B cell (primary cell): ENCODE measurements at regions of chr7 and their contacts with region 1.

Region 1: GRCh38 chr7:5083311-5083711 is 37.7 kb downstream of the RBAK start:
- DNase-seq: no peak
- ATAC-seq: no peak
- H3K4me3 ChIP-seq: no peak overlapping the region
- H3K4me3 Mint-ChIP-seq: no peak overlapping the region
- H3K27ac ChIP-seq: no peak overlapping the region
- H3K27ac Mint-ChIP-seq: no peak overlapping the region
- H3K4me1 ChIP-seq: peaks cover 0 to 5% of the 10 kb centered on the region in 2 donors
- H3K4me1 Mint-ChIP-seq: no peaks in the 10 kb centered on the region
- H3K27me3 ChIP-seq: peaks cover 0 to 20% (median 1%) of the 10 kb centered on the region in 4 experiments
- H3K27me3 Mint-ChIP-seq: peaks cover 19% of the 10 kb centered on the region
- CTCF ChIP-seq: no peak

Region 2: DNA sequence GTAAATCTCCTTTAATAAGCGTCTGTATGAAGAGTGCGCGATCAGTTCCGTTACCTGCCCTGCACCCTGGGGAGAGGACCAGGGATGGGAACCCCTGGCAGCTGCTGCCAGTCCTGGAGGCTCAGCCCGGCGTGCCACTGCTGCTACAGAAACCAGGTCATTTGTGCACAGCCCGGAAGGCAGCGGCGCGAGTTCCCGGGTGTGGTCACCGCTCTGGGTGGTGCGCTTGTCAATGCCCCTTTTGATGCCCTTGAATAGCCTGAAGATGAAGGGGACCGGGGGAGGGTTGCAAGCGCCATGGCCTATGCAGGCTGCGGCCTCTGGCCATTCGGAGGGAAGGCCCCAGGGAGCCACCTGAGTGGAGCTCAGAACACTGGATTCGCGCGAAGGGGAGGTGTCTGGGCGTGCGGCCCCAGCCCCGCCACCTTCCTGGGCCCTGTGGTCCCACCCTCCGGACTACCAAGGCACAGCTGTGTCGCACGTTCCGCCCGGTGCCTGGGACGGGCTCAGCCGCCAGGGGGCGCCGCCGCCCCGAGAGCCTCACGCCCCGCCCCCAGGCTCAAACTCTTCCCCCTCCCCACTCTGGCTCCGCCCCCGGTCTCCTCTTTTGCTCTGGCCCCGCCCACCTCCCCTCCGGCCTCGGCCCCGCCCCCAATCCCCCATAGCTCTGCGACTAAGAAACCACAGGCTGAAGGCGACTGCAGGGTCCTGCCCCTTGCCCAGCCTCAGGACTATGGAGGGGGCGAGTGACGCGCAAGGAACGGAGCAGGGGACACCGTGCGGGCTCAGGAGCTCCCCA is 291.4 kb before region 1 on chr7:
- CTCF ChIA-PET with region 1: interaction called, 54 read pairs
- POLR2A ChIA-PET with region 1: no interaction called
- intact Hi-C with region 1: loop called (anchors 1 kb)
- DNase-seq: peak; percentile 87
- ATAC-seq: peak; percentile 94
- H3K4me3 ChIP-seq: peak overlapping the region in 4 of 5 experiments; percentile 47 to 63 (median 61)
- H3K4me3 Mint-ChIP-seq: peak overlapping the region; percentile 61
- H3K27ac ChIP-seq: no peak overlapping the region
- H3K27ac Mint-ChIP-seq: no peak overlapping the region
- H3K4me1 ChIP-seq: peaks cover 0 to 9% of the 10 kb centered on the region in 2 donors
- H3K4me1 Mint-ChIP-seq: peaks cover 2% of the 10 kb centered on the region
- H3K27me3 ChIP-seq: no peaks in the 10 kb centered on the region
- H3K27me3 Mint-ChIP-seq: no peaks in the 10 kb centered on the region
- CTCF ChIP-seq: peak; percentile 79

Region 3: DNA sequence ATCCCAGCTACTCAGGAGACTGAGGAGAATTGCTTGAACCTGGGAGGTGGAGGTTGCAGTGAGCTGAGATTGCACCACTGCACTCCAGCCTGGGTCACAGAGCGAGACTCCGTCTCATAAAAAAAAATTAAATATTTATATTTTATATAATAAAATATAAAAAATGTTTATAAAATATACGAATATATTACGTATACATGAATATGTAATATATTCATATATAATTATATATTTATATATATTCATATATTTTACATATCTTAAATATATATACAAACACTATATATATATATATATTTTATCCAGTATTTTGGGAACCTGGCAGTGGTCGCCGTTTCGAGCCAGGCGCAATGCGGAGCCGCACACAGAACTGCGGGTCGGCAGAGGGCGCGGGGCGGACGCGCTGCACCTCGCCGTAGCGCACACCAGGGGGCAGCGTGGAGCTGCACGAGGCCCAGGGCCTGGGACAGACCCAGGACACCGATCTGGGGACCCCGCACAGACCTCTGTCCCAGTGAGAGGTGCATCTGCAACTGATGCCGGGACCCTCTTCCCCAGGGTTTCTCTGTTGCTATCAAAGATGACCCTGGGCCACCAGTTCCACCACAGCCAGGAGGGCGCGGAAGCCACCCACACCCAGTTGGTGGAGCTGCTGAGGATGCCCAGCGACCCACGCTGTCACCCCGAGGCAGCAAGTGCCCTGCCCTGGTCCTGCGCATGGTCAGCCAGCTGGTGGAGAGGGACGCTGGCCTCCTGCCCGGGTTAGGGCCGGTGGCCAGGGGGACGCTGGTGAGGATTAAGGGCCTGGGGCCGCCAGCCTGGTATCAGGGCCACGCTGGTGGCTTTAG is 285.2 kb before region 1 on chr7:
- CTCF ChIA-PET with region 1: interaction called, 54 read pairs
- POLR2A ChIA-PET with region 1: no interaction called
- intact Hi-C with region 1: no loop called
- DNase-seq: peak; percentile 73
- ATAC-seq: peak; percentile 91
- H3K4me3 ChIP-seq: no peak overlapping the region
- H3K4me3 Mint-ChIP-seq: no peak overlapping the region
- H3K27ac ChIP-seq: no peak overlapping the region
- H3K27ac Mint-ChIP-seq: no peak overlapping the region
- H3K4me1 ChIP-seq: peaks cover 0 to under 1% of the 10 kb centered on the region in 2 donors
- H3K4me1 Mint-ChIP-seq: no peaks in the 10 kb centered on the region
- H3K27me3 ChIP-seq: no peaks in the 10 kb centered on the region
- H3K27me3 Mint-ChIP-seq: no peaks in the 10 kb centered on the region
- CTCF ChIP-seq: peak; percentile 97

Region 4: GRCh38 chr7:4830176-4830575 is 253.1 kb before region 1 on chr7:
- CTCF ChIA-PET with region 1: interaction called, 24 read pairs
- POLR2A ChIA-PET with region 1: no interaction called
- intact Hi-C with region 1: no loop called
- DNase-seq: peak; percentile 63
- ATAC-seq: peak; percentile 72
- H3K4me3 ChIP-seq: no peak overlapping the region
- H3K4me3 Mint-ChIP-seq: no peak overlapping the region
- H3K27ac ChIP-seq: no peak overlapping the region
- H3K27ac Mint-ChIP-seq: no peak overlapping the region
- H3K4me1 ChIP-seq: no peaks in the 10 kb centered on the region
- H3K4me1 Mint-ChIP-seq: no peaks in the 10 kb centered on the region
- H3K27me3 ChIP-seq: no peaks in the 10 kb centered on the region
- H3K27me3 Mint-ChIP-seq: no peaks in the 10 kb centered on the region
- CTCF ChIP-seq: peak; percentile 64

Region 5: DNA sequence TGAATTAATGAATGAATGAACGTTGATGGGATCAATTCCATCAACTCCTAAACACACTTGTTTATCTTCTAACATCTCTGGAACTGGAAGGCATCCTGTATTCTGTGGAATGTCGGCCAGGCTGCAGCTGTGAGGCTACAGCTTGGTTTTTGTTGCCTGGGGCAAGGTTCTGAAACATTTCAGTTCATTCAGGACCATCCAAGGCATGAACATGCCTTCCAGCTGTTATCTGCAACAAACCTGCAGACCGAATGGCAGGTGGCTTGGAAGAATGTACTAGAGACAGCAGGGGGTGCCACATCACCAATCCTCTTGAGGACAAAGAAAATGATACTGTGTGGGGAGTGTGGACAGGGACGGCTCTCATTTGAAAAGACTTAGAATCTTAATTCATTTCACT is 233.9 kb before region 1 on chr7:
- CTCF ChIA-PET with region 1: interaction called, 12 read pairs
- POLR2A ChIA-PET with region 1: no interaction called
- intact Hi-C with region 1: loop called (anchors 1 kb)
- DNase-seq: peak; percentile 23
- ATAC-seq: no peak
- H3K4me3 ChIP-seq: no peak overlapping the region
- H3K4me3 Mint-ChIP-seq: no peak overlapping the region
- H3K27ac ChIP-seq: no peak overlapping the region
- H3K27ac Mint-ChIP-seq: no peak overlapping the region
- H3K4me1 ChIP-seq: no peaks in the 10 kb centered on the region
- H3K4me1 Mint-ChIP-seq: peaks cover 4% of the 10 kb centered on the region
- H3K27me3 ChIP-seq: peaks cover 0 to 4% (median 0%) of the 10 kb centered on the region in 4 experiments
- H3K27me3 Mint-ChIP-seq: peaks cover 21% of the 10 kb centered on the region
- CTCF ChIP-seq: no peak

Region 6: DNA sequence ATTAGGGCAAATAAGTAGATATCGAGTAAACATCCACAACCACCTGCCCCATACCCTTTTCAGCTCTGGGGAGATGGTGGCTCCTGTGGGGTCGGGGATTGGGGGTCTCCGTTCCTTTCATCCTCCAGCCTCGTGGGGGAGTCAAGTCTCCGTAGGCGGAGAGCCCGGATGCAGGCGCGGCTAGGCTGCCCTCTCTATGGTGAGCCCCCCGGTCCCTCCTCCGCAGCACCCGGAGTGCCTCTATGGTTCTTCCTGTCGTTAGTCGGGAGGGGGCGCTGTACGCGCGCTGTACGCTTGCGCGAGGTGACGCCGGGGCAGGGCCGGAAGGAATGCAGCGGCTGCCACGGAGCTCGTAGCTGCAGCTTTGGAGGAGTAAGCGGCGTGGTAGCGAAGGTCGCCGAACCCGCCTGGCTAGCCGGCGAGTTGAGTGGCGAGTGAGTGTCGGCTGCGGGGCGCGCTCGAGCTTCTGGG is 109.5 kb before region 1 on chr7:
- CTCF ChIA-PET with region 1: interaction called, 41 read pairs
- POLR2A ChIA-PET with region 1: interaction called, 9 read pairs
- intact Hi-C with region 1: loop called (anchors 1 kb)
- DNase-seq: peak; percentile 96
- ATAC-seq: peak; percentile 94
- H3K4me3 ChIP-seq: peak overlapping the region in 4 of 5 experiments; percentile 44 to 84 (median 67)
- H3K4me3 Mint-ChIP-seq: peak overlapping the region; percentile 100
- H3K27ac ChIP-seq: peak overlapping the region; percentile 14 to 72
- H3K27ac Mint-ChIP-seq: peak overlapping the region; percentile 100
- H3K4me1 ChIP-seq: peaks cover 2 to 3% of the 10 kb centered on the region in 2 donors
- H3K4me1 Mint-ChIP-seq: peaks cover 20% of the 10 kb centered on the region
- H3K27me3 ChIP-seq: no peaks in the 10 kb centered on the region
- H3K27me3 Mint-ChIP-seq: no peaks in the 10 kb centered on the region
- CTCF ChIP-seq: peak; percentile 91